ENCODE measurements at regions of chr22 and their contacts with region 1.

Region 1: DNA sequence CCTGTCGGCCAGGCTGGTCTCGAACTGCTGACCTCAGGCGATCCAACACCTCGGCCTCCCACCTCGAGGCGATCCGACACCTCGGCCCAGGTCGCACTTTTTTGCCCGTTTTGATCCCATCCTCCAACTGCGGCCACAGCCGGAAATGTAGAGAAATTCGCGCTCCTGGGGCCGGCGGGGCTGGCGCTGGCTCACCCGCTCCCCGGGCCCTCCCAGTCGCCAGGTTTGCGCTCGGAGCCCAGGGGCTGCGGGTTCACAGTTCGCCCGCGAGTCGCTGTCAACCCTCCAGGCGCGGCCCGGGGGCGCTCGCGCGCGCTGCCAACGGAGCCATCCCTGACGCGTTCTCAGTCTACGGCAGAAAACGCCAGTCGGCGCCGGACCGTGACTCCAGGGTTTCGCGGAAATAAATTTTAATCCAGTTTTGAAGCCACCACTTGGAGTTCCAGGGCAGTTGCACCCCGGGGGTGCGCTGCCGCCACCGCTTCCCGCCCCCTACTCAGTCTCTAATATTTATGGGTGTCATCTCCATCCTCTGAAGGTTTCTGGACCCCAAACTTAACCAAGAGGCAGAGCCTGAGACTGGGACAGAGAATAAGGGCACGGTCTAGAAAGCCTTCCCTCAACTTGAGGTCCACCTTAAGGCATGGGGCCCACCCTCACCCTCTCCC is 1.5 kb upstream of the KLHDC7B start:
- DNase-seq: peak; percentile 86 to 91
- ATAC-seq: peak; percentile 67 to 78 (median 73)
- H3K4me3 ChIP-seq: peak overlapping the region; percentile 30
- H3K4me3 Mint-ChIP-seq: peak overlapping the region; percentile 74
- H3K27ac ChIP-seq: peak overlapping the region; percentile 89
- H3K27ac Mint-ChIP-seq: peak overlapping the region; percentile 82 to 86
- H3K4me1 ChIP-seq: peaks cover 59% of the 10 kb centered on the region
- H3K4me1 Mint-ChIP-seq: peaks cover 21 to 53% of the 10 kb centered on the region in 2 donors
- H3K27me3 ChIP-seq: no peaks in the 10 kb centered on the region
- H3K27me3 Mint-ChIP-seq: no peaks in the 10 kb centered on the region
- CTCF ChIP-seq: peak; percentile 69

Region 2: DNA sequence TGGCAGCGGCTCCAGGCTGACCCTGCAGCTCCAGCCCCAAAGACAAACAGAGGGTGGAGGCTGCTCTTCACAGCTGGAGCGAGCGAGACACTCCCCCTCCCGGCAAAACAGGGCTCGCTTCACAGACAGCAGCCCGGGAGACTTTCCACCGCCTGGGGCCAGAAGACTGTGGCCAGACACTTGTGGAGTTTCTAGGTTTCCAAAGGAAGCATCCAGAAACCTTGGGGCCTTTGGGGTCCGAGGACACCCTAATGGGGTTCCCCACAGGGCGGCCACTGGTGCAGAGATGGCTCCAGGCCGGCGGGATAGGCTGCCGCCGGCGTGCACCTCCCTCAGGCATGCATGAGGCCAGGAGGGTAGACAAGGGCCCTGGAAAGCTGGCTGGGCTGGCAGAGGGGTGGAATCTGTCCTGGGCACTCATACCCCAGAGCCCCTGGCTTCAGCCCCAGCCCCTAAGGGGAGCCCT is 531.5 kb before region 1 on chr22 and contains the start of gene IL17REL:
- intact Hi-C with region 1: no loop called
- DNase-seq: no peak
- ATAC-seq: no peak
- H3K4me3 ChIP-seq: no peak within 1 kb of the TSS
- H3K4me3 Mint-ChIP-seq: peak within 1 kb of the TSS; percentile 67
- H3K27ac ChIP-seq: no peak within 1 kb of the TSS
- H3K27ac Mint-ChIP-seq: peak within 1 kb of the TSS in 1 of 2 donors; percentile 80
- H3K4me1 ChIP-seq: peaks cover 46% of the 10 kb centered on the region
- H3K4me1 Mint-ChIP-seq: peaks cover 0 to 18% of the 10 kb centered on the region in 2 donors
- H3K27me3 ChIP-seq: peaks cover 10% of the 10 kb centered on the region
- H3K27me3 Mint-ChIP-seq: peaks cover 9 to 23% of the 10 kb centered on the region in 2 donors
- CTCF ChIP-seq: no peak
- total RNA-seq, gene IL17REL: not detected

Region 3: DNA sequence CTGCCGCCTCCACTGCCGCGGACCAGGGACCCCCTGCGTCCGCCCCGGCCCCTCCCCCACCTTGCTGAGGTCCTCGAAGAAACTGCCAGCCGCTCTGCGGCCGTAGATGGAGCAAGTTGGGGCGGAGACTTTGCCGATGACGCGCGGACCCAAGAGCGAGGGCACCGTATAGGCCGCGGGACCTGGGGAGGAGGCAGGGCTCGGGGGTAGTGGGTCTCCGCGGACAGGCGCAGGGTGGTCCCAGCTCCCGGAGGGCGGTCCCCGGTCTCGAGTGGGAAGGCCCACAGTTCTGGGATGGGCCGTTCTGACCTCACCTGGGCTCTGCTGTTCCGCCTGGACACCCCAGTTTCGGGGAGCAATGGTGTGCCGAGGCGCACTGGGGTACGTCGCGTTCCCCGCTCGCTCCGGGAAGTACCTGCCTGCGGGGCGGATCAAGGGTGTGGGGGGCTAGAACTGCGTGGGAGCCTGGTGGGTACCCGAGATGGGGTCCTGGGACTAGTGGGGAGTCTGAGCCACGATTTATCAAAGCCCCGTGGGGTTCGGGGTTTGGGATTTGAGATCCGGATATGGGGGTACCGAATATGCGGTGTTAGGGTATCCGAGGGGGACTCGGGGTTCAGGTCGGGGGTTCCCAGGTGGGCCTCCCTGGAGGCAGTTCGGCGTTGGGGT is 13.2 kb before region 1 on chr22:
- intact Hi-C with region 1: loop called (anchors 1 kb)
- DNase-seq: peak; percentile 77 to 87
- ATAC-seq: peak; percentile 57 to 73 (median 60)
- H3K4me3 ChIP-seq: peak overlapping the region; percentile 80
- H3K4me3 Mint-ChIP-seq: peak overlapping the region; percentile 94
- H3K27ac ChIP-seq: peak overlapping the region; percentile 95
- H3K27ac Mint-ChIP-seq: peak overlapping the region; percentile 94 to 96
- H3K4me1 ChIP-seq: peaks cover 64% of the 10 kb centered on the region
- H3K4me1 Mint-ChIP-seq: peaks cover 24 to 40% of the 10 kb centered on the region in 2 donors
- H3K27me3 ChIP-seq: no peaks in the 10 kb centered on the region
- H3K27me3 Mint-ChIP-seq: peaks cover 0 to 13% of the 10 kb centered on the region in 2 donors
- CTCF ChIP-seq: no peak

Region 4: DNA sequence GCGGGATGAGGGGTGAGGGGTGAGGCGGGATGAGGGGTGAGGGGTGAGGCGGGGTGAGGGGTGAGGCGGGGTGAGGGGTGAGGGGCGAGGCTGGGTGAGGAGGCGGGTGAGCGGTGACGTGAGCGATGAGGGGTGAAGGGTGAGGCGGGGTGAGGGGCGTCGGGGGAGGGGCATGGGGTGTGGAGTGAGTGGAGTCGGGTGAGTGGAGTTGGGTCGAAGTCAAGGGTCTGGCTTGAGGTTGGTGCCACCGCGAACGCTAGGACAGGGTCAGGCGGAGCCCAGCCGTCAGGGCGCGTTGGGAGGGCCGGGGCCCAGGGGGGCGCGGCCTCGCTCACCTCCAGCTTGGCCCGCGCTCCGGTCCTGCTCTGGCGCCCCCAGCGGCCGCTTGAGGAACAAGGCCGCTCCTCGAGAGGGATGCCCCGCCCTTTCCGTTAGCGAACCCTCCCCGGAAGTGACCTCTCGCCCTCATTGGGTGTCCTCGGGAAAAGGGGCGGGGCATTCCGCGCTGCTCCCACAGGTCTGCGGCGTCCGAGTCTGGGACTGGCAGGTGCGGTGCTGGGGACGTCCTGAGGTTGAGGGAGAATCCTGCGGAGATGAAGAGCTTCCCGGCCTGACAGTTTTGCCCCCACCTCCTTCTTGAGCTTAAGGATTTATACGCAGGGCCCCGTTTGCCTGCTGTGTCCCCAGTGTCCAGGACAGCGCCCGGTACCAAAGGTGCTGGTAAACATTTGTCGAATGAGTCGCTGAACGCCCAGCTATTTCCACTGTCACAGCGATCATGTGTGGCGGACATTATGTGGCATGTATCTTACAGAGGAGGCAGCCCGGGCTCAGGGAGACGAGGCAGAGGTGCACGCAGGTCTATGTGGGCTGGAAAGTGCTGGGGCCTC is 18.6 kb after region 1 on chr22 and contains the start of gene SYCE3:
- intact Hi-C with region 1: loop called (anchors 1 kb)
- DNase-seq: peak; percentile 98
- ATAC-seq: peak; percentile 93 to 98 (median 93)
- H3K4me3 ChIP-seq: peak within 1 kb of the TSS; percentile 49
- H3K4me3 Mint-ChIP-seq: peak within 1 kb of the TSS; percentile 97
- H3K27ac ChIP-seq: peak within 1 kb of the TSS; percentile 74
- H3K27ac Mint-ChIP-seq: peak within 1 kb of the TSS; percentile 87 to 95
- H3K4me1 ChIP-seq: peaks cover 15% of the 10 kb centered on the region
- H3K4me1 Mint-ChIP-seq: peaks cover 23 to 28% of the 10 kb centered on the region in 2 donors
- H3K27me3 ChIP-seq: no peaks in the 10 kb centered on the region
- H3K27me3 Mint-ChIP-seq: peaks cover 0 to 6% of the 10 kb centered on the region in 2 donors
- CTCF ChIP-seq: peak; percentile 82
- total RNA-seq, gene SYCE3: not detected

Region 5: DNA sequence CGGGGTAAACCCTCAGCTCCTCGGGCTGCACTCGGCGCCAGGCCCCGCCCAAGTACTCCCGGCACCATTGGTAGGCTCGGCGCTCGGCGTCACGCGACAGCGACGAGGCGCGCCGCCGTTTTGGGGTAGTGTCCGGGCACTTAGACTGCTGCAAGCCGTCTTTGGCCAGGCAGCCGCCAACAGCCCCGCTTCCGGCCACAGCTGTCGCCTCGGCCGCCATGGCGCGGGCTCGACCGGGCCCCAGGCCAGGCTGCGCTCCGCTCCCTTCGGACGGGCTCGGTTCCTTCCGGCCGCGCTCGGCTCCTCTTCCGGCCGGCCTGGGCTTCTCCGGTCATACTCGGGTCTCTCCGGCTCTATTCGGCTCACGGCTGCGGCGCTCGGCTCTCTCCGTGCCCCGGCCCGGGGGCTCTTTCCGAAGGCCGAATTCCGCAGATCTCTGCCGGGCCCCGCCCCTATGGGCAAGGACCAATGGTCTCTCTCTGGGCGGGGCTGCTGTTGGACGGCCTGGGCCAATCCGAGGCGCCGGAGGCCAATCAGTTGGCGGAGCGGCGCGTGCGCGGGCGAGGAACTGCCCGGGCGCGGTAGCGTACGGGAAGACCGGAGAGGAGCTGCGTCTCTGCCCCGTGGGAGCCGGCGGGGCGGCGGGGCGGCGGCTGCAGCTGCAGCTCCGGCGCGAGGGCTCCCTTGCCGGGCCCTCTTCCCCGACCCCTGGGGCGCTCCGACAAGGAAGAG is 38.5 kb after region 1 on chr22 and contains the start of gene CHKB:
- intact Hi-C with region 1: loop called (anchors 5 kb)
- DNase-seq: peak; percentile 98
- ATAC-seq: peak; percentile 93 to 99 (median 93)
- H3K4me3 ChIP-seq: peak within 1 kb of the TSS; percentile 82
- H3K4me3 Mint-ChIP-seq: peak within 1 kb of the TSS; percentile 91
- H3K27ac ChIP-seq: peak within 1 kb of the TSS; percentile 92
- H3K27ac Mint-ChIP-seq: peak within 1 kb of the TSS; percentile 88 to 94
- H3K4me1 ChIP-seq: peaks cover 33% of the 10 kb centered on the region
- H3K4me1 Mint-ChIP-seq: peaks cover 0 to 24% of the 10 kb centered on the region in 2 donors
- H3K27me3 ChIP-seq: no peaks in the 10 kb centered on the region
- H3K27me3 Mint-ChIP-seq: no peaks in the 10 kb centered on the region
- CTCF ChIP-seq: no peak
- total RNA-seq, gene CHKB: 166 to 204 (median 180) TPM

Region 6: DNA sequence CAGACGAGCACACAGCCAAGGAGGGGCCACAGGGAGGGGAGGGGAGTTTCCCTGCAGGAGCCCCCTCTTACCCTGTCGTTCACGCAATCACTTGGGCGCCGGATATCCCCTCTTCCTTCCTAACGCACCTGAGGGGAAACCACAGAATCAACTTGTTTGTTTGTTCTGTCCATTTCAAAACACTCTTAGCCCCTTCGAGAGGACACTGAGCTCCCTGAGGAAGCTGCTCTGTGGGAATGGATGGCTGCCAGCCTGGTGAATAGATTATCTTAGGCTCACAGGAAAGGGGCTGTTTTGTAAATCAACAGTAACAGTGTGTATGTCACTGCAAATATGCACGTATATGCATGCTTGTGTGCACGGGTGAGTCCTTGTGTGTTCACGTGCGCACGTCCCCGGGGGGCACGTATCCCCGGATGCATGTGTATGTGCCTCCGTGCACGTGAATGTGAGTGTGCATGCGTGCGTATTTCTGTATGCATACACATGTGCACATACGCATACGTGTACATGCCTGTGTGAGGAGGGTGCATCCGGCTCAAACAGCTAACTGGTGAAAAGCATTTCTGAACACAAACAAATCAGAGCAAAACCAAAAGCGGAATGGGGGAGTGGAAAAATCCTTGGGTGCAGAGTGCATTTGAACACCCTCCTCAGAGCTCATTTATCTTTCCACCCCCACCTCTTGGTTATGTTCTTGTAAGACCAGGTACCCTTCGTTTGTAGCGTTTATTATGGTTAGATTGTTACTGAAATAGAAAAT is 76.6 kb after region 1 on chr22:
- intact Hi-C with region 1: loop called (anchors 1 kb)
- DNase-seq: peak; percentile 43 to 97
- ATAC-seq: peak; percentile 81 to 91 (median 84)
- H3K4me3 ChIP-seq: peak overlapping the region; percentile 42
- H3K4me3 Mint-ChIP-seq: peak overlapping the region; percentile 92
- H3K27ac ChIP-seq: peak overlapping the region; percentile 84
- H3K27ac Mint-ChIP-seq: peak overlapping the region; percentile 83 to 90
- H3K4me1 ChIP-seq: peaks cover 36% of the 10 kb centered on the region
- H3K4me1 Mint-ChIP-seq: peaks cover 27 to 35% of the 10 kb centered on the region in 2 donors
- H3K27me3 ChIP-seq: no peaks in the 10 kb centered on the region
- H3K27me3 Mint-ChIP-seq: peaks cover 0 to 3% of the 10 kb centered on the region in 2 donors
- CTCF ChIP-seq: peak; percentile 79

Measured in natural killer cell (primary cell).